Vagina (tissue), 2 donors: ENCODE measurements at regions of chr7 and their contacts with region 1.

Region 1: DNA sequence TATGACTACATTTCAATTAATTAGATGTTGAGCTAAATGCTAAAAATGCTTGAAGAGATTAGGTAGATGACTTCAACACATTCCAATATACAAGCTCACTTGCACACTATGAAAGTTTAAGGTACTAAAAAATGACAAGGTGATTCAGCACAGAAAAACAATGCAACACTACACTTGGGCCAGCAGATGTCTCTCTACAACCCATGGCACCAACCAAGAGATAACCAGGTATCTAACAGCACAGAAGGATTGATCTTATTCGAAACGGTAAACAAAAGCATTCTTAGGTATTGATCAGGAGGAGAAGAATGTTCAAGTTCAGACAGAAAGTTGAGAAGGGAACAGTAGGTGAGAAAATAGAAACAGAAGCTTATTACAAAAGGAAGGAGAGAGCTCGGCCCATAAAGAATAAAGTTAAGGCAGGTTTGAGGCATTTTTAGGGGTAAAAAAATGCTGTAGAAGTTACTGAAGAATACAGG is 248.2 kb upstream of the KLF14 start:
- DNase-seq: no peak
- H3K4me3 ChIP-seq: no peak overlapping the region
- H3K27ac ChIP-seq: no peak overlapping the region
- H3K4me1 ChIP-seq: peaks cover 74% of the 10 kb centered on the region
- H3K27me3 ChIP-seq: no peaks in the 10 kb centered on the region
- CTCF ChIP-seq: peak in 2 of 3 experiments; percentile 20 to 31
- POLR2A ChIP-seq: no peak

Region 2: DNA sequence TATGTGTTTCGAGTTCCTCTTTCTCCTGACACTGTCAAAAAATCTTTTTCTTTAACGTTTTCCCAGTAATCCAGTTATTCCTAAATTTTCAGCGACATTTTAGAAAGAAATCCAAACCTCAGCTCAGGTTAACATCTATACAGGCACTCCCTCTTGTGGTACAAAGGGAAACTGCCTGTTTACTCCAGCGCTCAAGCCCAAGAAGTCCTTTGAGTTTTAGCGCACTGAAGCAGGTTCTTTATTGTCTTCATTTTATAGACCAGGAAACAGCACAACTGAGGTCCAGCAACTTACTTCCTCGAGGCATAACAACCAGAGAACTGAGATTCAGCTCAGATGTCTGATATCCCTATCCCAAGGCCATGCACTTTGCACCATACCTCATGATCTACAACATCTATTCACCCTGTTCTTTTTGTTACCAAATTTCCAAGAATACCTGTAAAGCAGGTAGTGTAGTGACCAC is 58.3 kb after region 1 on chr7:
- intact Hi-C with region 1: loop called (anchors 10 kb)
- DNase-seq: no peak
- H3K4me3 ChIP-seq: no peak overlapping the region
- H3K27ac ChIP-seq: peak overlapping the region; percentile 68
- H3K4me1 ChIP-seq: peaks cover 58% of the 10 kb centered on the region
- H3K27me3 ChIP-seq: no peaks in the 10 kb centered on the region
- CTCF ChIP-seq: peak; percentile 70 to 73 (median 73)
- POLR2A ChIP-seq: no peak